HEK293 (cell line): ENCODE measurements at regions of chr22 and their contacts with region 1.

Region 1: GRCh38 chr22:43230971-43231723 is 44.2 kb upstream of the TTLL12 start:
- H3K4me3 ChIP-seq: no peak overlapping the region
- H3K27ac ChIP-seq: no peak overlapping the region
- H3K4me1 ChIP-seq: no peaks in the 10 kb centered on the region
- CTCF ChIP-seq: peak; percentile 94

Region 2: GRCh38 chr22:43110444-43110926 is 120.7 kb before region 1 on chr22 and contains the start of gene BIK:
- CTCF ChIA-PET with region 1: no interaction called
- POLR2A ChIA-PET with region 1: no interaction called
- H3K4me3 ChIP-seq: peak within 1 kb of the TSS; percentile 46
- H3K27ac ChIP-seq: peak within 1 kb of the TSS; percentile 47; the same call in 1 of the 2 replicates
- H3K4me1 ChIP-seq: peaks cover 3% of the 10 kb centered on the region; the same call in 1 of the 2 replicates
- CTCF ChIP-seq: peak; percentile 44; the same call in 1 of the 2 replicates

Region 3: GRCh38 chr22:43187171-43188099 is 43.7 kb before region 1 on chr22:
- CTCF ChIA-PET with region 1: interaction called, 59 read pairs
- POLR2A ChIA-PET with region 1: interaction called, 12 read pairs
- H3K4me3 ChIP-seq: peak overlapping the region; percentile 37
- H3K27ac ChIP-seq: peak overlapping the region; percentile 90
- H3K4me1 ChIP-seq: no peaks in the 10 kb centered on the region
- CTCF ChIP-seq: peak; percentile 87

Region 4: GRCh38 chr22:43213051-43213450 is 18.1 kb before region 1 on chr22:
- CTCF ChIA-PET with region 1: interaction called, 16 read pairs
- POLR2A ChIA-PET with region 1: no interaction called
- H3K4me3 ChIP-seq: no peak overlapping the region
- H3K27ac ChIP-seq: no peak overlapping the region
- H3K4me1 ChIP-seq: no peaks in the 10 kb centered on the region
- CTCF ChIP-seq: no peak

Region 5: DNA sequence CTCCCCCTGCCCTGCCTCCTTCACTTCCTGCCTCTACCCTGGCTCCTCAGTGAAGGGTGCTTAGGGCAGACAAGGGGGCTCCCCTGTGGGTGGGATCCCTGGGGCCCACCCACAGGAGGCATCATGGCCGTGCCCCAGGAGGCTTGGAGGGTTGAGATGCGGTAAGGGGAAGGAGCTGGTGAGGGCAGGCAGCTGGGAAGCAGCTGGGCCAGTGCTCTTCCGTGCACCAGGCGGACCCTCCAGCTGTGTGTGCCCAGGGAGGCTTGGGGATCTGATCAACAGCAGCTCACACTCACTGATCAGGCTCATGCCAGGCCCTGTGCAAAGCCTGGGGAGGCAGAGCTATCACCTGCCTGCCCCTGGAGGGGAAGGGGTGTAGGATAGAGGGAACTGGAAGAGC is 15.0 kb after region 1 on chr22:
- CTCF ChIA-PET with region 1: interaction called, 15 read pairs
- POLR2A ChIA-PET with region 1: no interaction called
- H3K4me3 ChIP-seq: no peak overlapping the region
- H3K27ac ChIP-seq: no peak overlapping the region
- H3K4me1 ChIP-seq: no peaks in the 10 kb centered on the region
- CTCF ChIP-seq: no peak

Region 6: GRCh38 chr22:43377896-43378704 is 147.0 kb after region 1 on chr22:
- CTCF ChIA-PET with region 1: interaction called, 152 read pairs
- POLR2A ChIA-PET with region 1: interaction called, 8 read pairs
- H3K4me3 ChIP-seq: no peak overlapping the region
- H3K27ac ChIP-seq: no peak overlapping the region
- H3K4me1 ChIP-seq: peaks cover 5% of the 10 kb centered on the region; the same call in 1 of the 2 replicates
- CTCF ChIP-seq: no peak

Region 7: GRCh38 chr22:43385770-43386641 is 154.9 kb after region 1 on chr22:
- CTCF ChIA-PET with region 1: interaction called, 152 read pairs
- POLR2A ChIA-PET with region 1: interaction called, 3 read pairs
- H3K4me3 ChIP-seq: no peak overlapping the region
- H3K27ac ChIP-seq: no peak overlapping the region
- H3K4me1 ChIP-seq: no peaks in the 10 kb centered on the region
- CTCF ChIP-seq: peak; percentile 89